B cell (primary cell): ENCODE measurements at regions of chr11 and their contacts with region 1.

Region 1: GRCh38 chr11:64246871-64247728 is at the start of gene PPP1R14B:
- DNase-seq: peak; percentile 85
- ATAC-seq: peak; percentile 60
- H3K4me3 ChIP-seq: peak within 1 kb of the TSS; percentile 78 to 99 (median 88)
- H3K4me3 Mint-ChIP-seq: peak within 1 kb of the TSS; percentile 90
- H3K27ac ChIP-seq: peak within 1 kb of the TSS; percentile 53 to 79
- H3K27ac Mint-ChIP-seq: peak within 1 kb of the TSS; percentile 91
- H3K4me1 ChIP-seq: peaks cover 26 to 54% of the 10 kb centered on the region in 2 donors
- H3K4me1 Mint-ChIP-seq: peaks cover 40% of the 10 kb centered on the region
- H3K27me3 ChIP-seq: no peaks in the 10 kb centered on the region
- H3K27me3 Mint-ChIP-seq: no peaks in the 10 kb centered on the region
- CTCF ChIP-seq: no peak
- total RNA-seq, gene PPP1R14B: 39.2 and 41.2 TPM in 2 replicates

Region 2: GRCh38 chr11:64225612-64226506 is 21.2 kb before region 1 on chr11 and contains the starts of genes NUDT22 and TRPT1:
- CTCF ChIA-PET with region 1: interaction called, 8 read pairs
- POLR2A ChIA-PET with region 1: interaction called, 22 read pairs
- intact Hi-C with region 1: loop called (anchors 1 kb)
- DNase-seq: peak; percentile 91
- ATAC-seq: peak; percentile 53
- H3K4me3 ChIP-seq: peak within 1 kb of the TSS; percentile 64 to 97 (median 92)
- H3K4me3 Mint-ChIP-seq: peak within 1 kb of the TSS; percentile 91
- H3K27ac ChIP-seq: peak within 1 kb of the TSS; percentile 82 to 86
- H3K27ac Mint-ChIP-seq: peak within 1 kb of the TSS; percentile 93
- H3K4me1 ChIP-seq: peaks cover 26 to 41% of the 10 kb centered on the region in 2 donors
- H3K4me1 Mint-ChIP-seq: peaks cover 43% of the 10 kb centered on the region
- H3K27me3 ChIP-seq: no peaks in the 10 kb centered on the region
- H3K27me3 Mint-ChIP-seq: no peaks in the 10 kb centered on the region
- CTCF ChIP-seq: peak; percentile 63
- total RNA-seq, gene NUDT22: 97.2 and 104 TPM in 2 replicates
- total RNA-seq, gene TRPT1: 59.6 and 62.0 TPM in 2 replicates

Region 3: DNA sequence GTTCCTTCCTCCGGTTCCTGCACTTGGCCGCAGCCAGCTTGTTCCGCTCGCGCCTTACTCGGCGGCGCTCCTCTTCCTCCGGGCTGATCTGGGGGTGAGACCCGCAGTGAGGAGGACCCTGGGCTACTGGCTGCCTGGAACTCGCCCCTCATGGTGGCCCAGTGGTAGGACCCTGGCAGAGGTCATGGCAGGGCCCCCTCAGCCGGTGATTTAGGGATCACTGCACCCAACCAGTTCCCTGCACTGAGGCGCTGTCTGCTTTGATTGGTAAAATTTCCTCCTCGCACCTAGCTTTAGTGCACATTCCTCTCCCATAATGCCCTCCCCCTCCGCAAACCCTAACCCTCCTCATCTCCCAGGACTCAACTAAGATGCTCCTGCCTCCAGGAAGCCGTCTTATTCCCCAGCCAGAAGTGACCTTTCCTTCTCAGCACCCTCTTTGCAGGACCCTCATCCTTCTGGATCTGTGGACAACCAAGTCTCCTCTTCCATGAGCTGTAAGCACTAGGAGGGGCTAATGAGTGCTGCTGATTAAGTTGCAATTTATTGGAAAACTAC is 1647.0 kb after region 1 on chr11:
- CTCF ChIA-PET with region 1: no interaction called
- POLR2A ChIA-PET with region 1: interaction called, 10 read pairs
- intact Hi-C with region 1: no loop called
- DNase-seq: peak; percentile 63
- ATAC-seq: no peak
- H3K4me3 ChIP-seq: peak overlapping the region in 4 of 5 experiments; percentile 33 to 49 (median 44)
- H3K4me3 Mint-ChIP-seq: peak overlapping the region; percentile 98
- H3K27ac ChIP-seq: peak overlapping the region; percentile 69 to 70
- H3K27ac Mint-ChIP-seq: peak overlapping the region; percentile 98
- H3K4me1 ChIP-seq: peaks cover 47 to 51% of the 10 kb centered on the region in 2 donors
- H3K4me1 Mint-ChIP-seq: peaks cover 43% of the 10 kb centered on the region
- H3K27me3 ChIP-seq: peaks cover 0 to 7% (median 3%) of the 10 kb centered on the region in 4 experiments
- H3K27me3 Mint-ChIP-seq: peaks cover 4% of the 10 kb centered on the region
- CTCF ChIP-seq: no peak